ENCODE measurements at regions of chr12 and their contacts with region 1.

Region 1: GRCh38 chr12:49188914-49189367 is at the start of gene TUBA1A:
- DNase-seq: peak; percentile 97
- total RNA-seq, gene TUBA1A: 240 to 247 TPM

Region 2: GRCh38 chr12:49130151-49131050 is 58.5 kb before region 1 on chr12:
- intact Hi-C with region 1: loop called (anchors 2 to 10 kb)
- DNase-seq: peak; percentile 99

Region 3: GRCh38 chr12:49515266-49515665 is 326.3 kb after region 1 on chr12:
- intact Hi-C with region 1: no loop called
- DNase-seq: no peak

Measured in posterior vena cava (tissue), 2 donors.